Right cardiac atrium (tissue), 5 donors: ENCODE measurements at regions of chr2 and their contacts with region 1.

Region 1: GRCh38 chr2:69643602-69644505 is at the start of gene AAK1:
- DNase-seq: peak; percentile 92 to 97 (median 96)
- ATAC-seq: peak; percentile 97
- H3K4me3 ChIP-seq: peak within 1 kb of the TSS; percentile 97
- H3K27ac ChIP-seq: peak within 1 kb of the TSS; percentile 100
- H3K4me1 ChIP-seq: peaks cover 14% of the 10 kb centered on the region
- H3K27me3 ChIP-seq: no peaks in the 10 kb centered on the region
- total RNA-seq, gene AAK1: 45.6 to 57.5 (median 53.4) TPM

Region 2: DNA sequence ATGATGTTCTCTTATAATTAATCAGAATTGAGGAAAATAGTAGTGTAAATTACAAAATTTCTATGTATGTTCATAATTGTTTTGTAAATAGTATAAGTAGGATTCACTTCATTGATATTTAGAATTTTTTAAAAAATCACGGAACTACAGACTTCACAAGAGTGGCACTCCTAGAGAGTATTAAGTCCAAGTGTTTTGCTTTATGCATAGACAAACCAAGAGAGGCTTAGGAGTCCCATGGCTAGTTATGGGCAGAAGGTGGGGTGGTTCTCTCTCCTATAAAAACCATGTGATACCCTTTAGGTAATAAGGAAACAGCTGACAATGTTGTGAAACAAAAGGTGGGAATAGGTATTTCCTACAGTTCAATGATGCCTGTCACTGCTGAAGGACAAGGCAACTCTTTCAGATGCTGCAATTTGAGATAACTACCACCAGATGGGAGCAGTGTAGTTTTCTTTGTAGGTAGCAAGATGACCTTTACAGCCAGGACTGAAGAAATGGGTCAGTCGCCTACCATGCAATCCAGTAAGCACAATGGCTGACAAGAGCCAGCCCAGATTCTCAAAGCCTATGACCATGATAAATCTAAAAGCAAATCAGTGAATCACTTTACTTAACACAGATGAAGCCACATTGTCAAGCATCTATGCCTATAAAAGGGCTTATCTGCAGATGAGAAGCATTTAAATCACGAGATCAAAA is 84.3 kb before region 1 on chr2:
- intact Hi-C with region 1: loop called in 2 of 4 experiments (anchors 5 to 10 kb)
- DNase-seq: no peak
- ATAC-seq: peak; percentile 73 to 77
- H3K4me3 ChIP-seq: no peak overlapping the region
- H3K27ac ChIP-seq: no peak overlapping the region
- H3K4me1 ChIP-seq: peaks cover 6% of the 10 kb centered on the region
- H3K27me3 ChIP-seq: no peaks in the 10 kb centered on the region

Region 3: DNA sequence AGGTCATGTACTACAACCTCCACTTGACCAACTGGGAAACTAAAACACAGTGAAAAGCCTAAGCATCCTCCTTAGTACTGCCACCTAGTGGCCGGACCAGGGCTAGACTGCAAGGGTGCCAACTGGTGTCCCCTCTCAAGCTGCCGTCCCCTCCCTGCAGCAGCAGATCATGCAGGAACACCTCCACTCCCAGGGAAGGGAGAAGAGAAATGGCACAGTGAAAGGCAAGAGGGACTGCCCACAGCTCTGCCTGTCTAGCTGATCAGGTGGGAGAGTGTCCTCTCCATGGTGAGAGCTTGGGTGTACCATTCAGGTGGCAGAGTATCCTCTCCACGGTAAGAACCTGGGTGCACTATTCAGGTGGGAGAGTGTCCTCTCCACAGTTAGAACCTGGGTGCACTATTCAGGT is 78.4 kb before region 1 on chr2:
- intact Hi-C with region 1: loop called in 3 of 4 experiments (anchors 5 to 10 kb)
- DNase-seq: peak; percentile 43 to 80 (median 76)
- ATAC-seq: peak; percentile 60 to 70
- H3K4me3 ChIP-seq: no peak overlapping the region
- H3K27ac ChIP-seq: no peak overlapping the region
- H3K4me1 ChIP-seq: peaks cover 7% of the 10 kb centered on the region
- H3K27me3 ChIP-seq: no peaks in the 10 kb centered on the region

Region 4: GRCh38 chr2:69572641-69573040 is 71.2 kb before region 1 on chr2:
- intact Hi-C with region 1: loop called in 2 of 4 experiments (anchors 5 to 10 kb)
- DNase-seq: peak in 1 of 3 donors; percentile 66
- ATAC-seq: peak; percentile 54 to 77
- H3K4me3 ChIP-seq: no peak overlapping the region
- H3K27ac ChIP-seq: no peak overlapping the region
- H3K4me1 ChIP-seq: peaks cover 5% of the 10 kb centered on the region
- H3K27me3 ChIP-seq: no peaks in the 10 kb centered on the region

Region 5: DNA sequence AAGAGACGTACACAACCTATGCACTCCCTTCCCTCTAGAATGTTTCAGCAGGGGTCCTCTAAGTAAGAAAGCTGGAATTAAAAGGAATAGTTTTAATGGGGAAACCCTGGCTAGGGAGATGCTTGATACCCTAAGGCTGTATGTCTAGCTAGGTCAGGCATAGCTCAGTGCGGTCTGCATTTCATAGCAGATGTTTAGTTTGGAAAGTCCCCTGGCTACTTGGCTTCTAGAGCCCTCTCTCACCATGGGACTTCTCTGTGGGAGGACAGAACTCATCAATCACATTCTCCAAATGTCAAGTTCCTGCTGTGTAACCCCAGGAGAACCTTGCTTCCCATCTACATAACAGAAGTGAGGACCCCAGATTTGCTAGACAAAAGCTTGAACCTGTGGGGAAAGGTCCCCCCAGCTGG is 74.0 kb after region 1 on chr2:
- intact Hi-C with region 1: loop called in 1 of 4 experiments (anchors 10 kb)
- DNase-seq: no peak
- ATAC-seq: no peak
- H3K4me3 ChIP-seq: no peak overlapping the region
- H3K27ac ChIP-seq: no peak overlapping the region
- H3K4me1 ChIP-seq: no peaks in the 10 kb centered on the region
- H3K27me3 ChIP-seq: no peaks in the 10 kb centered on the region